ENCODE measurements at regions of chr12 and their contacts with region 1.

Region 1: GRCh38 chr12:109597795-109598427 is 24.3 kb downstream of the MVK start:
- DNase-seq: peak; percentile 7
- H3K4me3 ChIP-seq: no peak overlapping the region; the same call in 1 of the 2 replicates
- CTCF ChIP-seq: peak; percentile 97

Region 2: DNA sequence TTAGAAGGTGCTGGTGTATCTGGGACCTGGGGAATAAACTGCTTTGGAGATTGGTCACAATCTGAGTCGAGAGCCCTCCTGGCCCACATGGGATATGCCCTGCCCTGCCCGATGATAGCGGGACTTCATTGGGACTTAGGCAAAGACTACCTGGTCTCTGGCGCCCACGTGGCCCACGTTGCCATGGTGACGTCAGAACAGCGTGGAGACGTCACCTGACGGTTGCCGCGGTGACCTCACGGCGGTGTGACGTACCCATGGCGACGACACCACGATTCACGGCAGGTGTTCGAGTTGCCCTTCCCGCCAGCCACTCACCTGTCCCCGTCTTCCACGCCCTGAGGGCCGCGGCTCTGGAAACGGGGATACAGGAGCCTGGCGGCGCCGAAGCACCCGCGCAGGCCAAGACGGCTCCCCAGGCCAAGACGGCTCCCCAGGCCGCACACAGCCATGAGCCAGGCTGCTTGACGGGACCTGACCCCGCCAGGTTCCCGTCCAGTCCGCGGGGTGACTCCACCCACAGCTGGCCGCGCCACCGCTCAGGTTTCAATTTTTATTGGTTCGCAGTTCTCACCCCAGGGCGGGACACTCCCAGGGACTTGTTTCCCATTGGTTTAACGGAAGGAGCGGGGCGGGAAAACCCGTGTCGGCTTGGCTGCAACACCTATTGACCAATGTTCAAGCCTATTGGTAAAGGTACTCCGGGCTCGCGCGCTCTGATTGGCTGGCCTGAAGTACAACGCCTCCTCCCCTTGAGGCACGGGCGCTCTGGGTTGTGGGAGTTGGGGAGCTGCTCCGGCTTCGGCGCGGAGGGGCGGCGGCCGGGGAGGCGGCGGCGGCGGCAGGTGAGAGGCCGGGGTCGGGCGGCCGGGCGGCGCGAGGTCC is 24.6 kb before region 1 on chr12 and contains the starts of genes MMAB and MVK:
- CTCF ChIA-PET with region 1: interaction called, 27 read pairs
- POLR2A ChIA-PET with region 1: no interaction called
- DNase-seq: peak; percentile 96
- H3K4me3 ChIP-seq: peak within 1 kb of the TSS; percentile 87
- CTCF ChIP-seq: no peak

Region 3: GRCh38 chr12:109612975-109613502 is 15.1 kb after region 1 on chr12:
- CTCF ChIA-PET with region 1: interaction called, 20 read pairs
- POLR2A ChIA-PET with region 1: no interaction called
- DNase-seq: no peak
- H3K4me3 ChIP-seq: no peak overlapping the region
- CTCF ChIP-seq: peak; percentile 31

Region 4: DNA sequence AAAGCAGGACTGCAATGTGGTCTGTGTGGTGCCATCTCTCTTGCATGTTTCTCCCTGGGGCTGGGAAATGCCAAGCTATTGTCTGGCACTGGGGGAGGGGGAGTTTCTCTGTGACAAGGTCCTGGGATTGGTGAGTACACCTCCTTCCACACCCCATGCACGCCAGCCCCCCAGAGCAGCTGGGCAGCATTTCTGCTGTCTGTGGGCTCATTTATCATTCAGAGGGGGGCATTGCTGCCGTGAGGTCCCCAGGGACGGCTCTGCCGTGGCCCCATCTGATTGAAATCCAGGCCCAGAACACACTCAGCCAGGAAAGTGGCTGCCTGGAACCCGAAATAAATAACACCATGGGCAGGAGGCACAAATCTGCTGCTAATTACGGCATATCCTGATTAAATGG is 103.2 kb after region 1 on chr12:
- CTCF ChIA-PET with region 1: no interaction called
- POLR2A ChIA-PET with region 1: no interaction called
- DNase-seq: no peak
- H3K4me3 ChIP-seq: no peak overlapping the region
- CTCF ChIP-seq: no peak

Region 5: GRCh38 chr12:109763201-109763841 is 165.4 kb after region 1 on chr12:
- CTCF ChIA-PET with region 1: interaction called, 10 read pairs
- POLR2A ChIA-PET with region 1: no interaction called
- DNase-seq: no peak
- H3K4me3 ChIP-seq: no peak overlapping the region
- CTCF ChIP-seq: no peak

Region 6: DNA sequence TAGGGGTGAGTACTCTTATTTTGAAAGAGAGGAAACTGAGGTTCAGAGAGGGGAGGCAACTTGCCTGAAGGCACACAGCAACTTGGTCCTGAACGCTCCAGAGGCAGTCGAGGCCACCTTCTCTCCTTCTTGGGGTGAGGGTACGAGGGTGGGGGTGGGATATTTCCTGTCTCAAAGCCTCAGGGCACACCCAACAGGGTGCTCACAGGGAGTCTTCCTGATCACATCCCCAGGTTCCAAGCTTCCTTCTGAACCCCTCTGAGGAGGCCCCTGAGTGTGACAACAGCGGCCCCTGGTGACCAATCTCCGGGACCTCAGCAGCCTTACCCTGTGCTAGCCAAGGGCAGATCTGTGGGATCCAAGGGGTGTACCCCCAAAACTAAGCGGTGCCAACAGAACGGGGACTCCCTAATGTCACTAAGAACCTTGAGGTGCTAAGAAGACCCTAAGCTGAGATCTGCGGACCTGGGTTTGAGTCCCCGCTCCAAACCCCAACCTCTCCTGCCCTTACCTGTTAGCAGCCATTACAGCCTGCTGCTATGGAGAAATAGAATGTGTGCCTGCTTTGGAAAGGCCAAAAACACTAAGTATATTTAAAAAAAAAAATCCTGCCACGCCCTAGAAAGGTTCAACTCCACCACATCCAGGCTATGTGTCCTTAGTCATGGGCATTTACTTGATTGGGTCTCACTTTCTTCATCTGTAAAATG is 177.4 kb after region 1 on chr12:
- CTCF ChIA-PET with region 1: interaction called, 241 read pairs
- POLR2A ChIA-PET with region 1: no interaction called
- DNase-seq: no peak
- H3K4me3 ChIP-seq: no peak overlapping the region
- CTCF ChIP-seq: peak; percentile 91

Measured in AG04449 (cell line).